B cell (primary cell): ENCODE measurements at regions of chr3 and their contacts with region 1.

Region 1: DNA sequence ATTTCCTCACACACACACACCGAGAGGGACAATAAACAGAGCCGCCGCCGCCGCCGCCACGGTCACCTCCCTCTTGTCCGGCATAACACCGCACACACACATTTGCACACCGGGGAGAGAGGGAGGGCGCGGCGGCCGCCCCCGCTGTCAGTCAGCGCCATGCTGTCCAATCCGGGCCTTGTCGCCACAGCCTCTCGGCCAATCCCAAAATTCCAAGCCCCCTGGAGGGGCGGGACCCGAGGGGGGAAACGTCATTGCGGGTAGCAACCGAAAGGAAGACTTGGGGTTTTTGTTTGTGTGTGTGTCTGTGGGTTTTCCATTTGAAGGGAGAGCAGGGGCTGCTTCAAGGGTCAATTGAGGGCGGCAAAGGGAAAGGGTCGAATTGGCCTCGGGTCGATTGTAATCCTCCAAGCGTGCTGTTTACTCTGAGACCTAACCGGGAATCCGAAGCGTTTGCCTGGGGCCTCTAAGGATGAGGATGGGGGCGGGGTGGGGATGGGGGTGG is at the start of gene TOP2B:
- DNase-seq: peak; percentile 96
- ATAC-seq: peak; percentile 86
- H3K4me3 ChIP-seq: peak within 1 kb of the TSS; percentile 60 to 96 (median 86)
- H3K4me3 Mint-ChIP-seq: peak within 1 kb of the TSS; percentile 97
- H3K27ac ChIP-seq: peak within 1 kb of the TSS; percentile 93 to 96
- H3K27ac Mint-ChIP-seq: peak within 1 kb of the TSS; percentile 96
- H3K4me1 ChIP-seq: peaks cover 31 to 47% of the 10 kb centered on the region in 2 donors
- H3K4me1 Mint-ChIP-seq: peaks cover 46% of the 10 kb centered on the region
- H3K27me3 ChIP-seq: no peaks in the 10 kb centered on the region
- H3K27me3 Mint-ChIP-seq: no peaks in the 10 kb centered on the region
- CTCF ChIP-seq: no peak
- total RNA-seq, gene TOP2B: 149 and 151 TPM in 2 replicates

Region 2: GRCh38 chr3:23805633-23806533 is 1859.0 kb before region 1 on chr3 and contains the start of gene UBE2E1:
- CTCF ChIA-PET with region 1: no interaction called
- POLR2A ChIA-PET with region 1: no interaction called
- intact Hi-C with region 1: loop called (anchors 10 kb)
- DNase-seq: peak; percentile 91
- ATAC-seq: peak; percentile 79
- H3K4me3 ChIP-seq: peak within 1 kb of the TSS in 4 of 5 experiments; percentile 57 to 88 (median 70)
- H3K4me3 Mint-ChIP-seq: peak within 1 kb of the TSS; percentile 96
- H3K27ac ChIP-seq: peak within 1 kb of the TSS; percentile 54 to 88
- H3K27ac Mint-ChIP-seq: peak within 1 kb of the TSS; percentile 97
- H3K4me1 ChIP-seq: peaks cover 32 to 36% of the 10 kb centered on the region in 2 donors
- H3K4me1 Mint-ChIP-seq: peaks cover 41% of the 10 kb centered on the region
- H3K27me3 ChIP-seq: no peaks in the 10 kb centered on the region
- H3K27me3 Mint-ChIP-seq: no peaks in the 10 kb centered on the region
- CTCF ChIP-seq: no peak
- total RNA-seq, gene UBE2E1: 63.7 and 68.2 TPM in 2 replicates

Region 3: GRCh38 chr3:23945903-23946751 is 1718.7 kb before region 1 on chr3:
- CTCF ChIA-PET with region 1: no interaction called
- POLR2A ChIA-PET with region 1: no interaction called
- intact Hi-C with region 1: loop called (anchors 5 kb)
- DNase-seq: peak; percentile 99
- ATAC-seq: peak; percentile 77
- H3K4me3 ChIP-seq: peak overlapping the region; percentile 49 to 88 (median 84)
- H3K4me3 Mint-ChIP-seq: peak overlapping the region; percentile 93
- H3K27ac ChIP-seq: peak overlapping the region; percentile 83
- H3K27ac Mint-ChIP-seq: peak overlapping the region; percentile 92
- H3K4me1 ChIP-seq: peaks cover 30 to 33% of the 10 kb centered on the region in 2 donors
- H3K4me1 Mint-ChIP-seq: peaks cover 48% of the 10 kb centered on the region
- H3K27me3 ChIP-seq: no peaks in the 10 kb centered on the region
- H3K27me3 Mint-ChIP-seq: no peaks in the 10 kb centered on the region
- CTCF ChIP-seq: no peak

Region 4: DNA sequence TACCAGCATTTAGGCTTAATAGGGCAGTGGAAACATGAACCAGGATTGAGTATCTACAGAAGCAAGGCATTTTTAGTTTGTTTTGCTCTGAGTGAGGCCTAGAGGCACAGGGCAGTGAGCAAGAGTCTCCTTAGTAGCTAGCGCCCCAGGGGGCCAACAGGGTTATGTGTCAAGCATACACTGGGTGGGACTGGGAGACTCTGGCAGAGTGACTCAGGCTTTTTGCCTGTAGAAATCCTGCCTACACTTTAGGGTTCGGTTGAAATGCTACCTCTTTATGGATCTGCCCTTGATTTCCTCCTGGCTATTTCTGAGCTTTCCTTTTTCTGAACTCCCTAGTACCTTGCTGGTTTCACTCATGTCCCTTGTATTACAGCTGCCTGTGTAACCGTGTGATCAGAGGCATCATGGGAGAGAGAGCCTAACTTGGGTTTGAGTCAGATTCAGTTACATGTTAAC is 72.3 kb before region 1 on chr3:
- CTCF ChIA-PET with region 1: no interaction called
- POLR2A ChIA-PET with region 1: no interaction called
- intact Hi-C with region 1: no loop called
- DNase-seq: no peak
- ATAC-seq: no peak
- H3K4me3 ChIP-seq: no peak overlapping the region
- H3K4me3 Mint-ChIP-seq: no peak overlapping the region
- H3K27ac ChIP-seq: no peak overlapping the region
- H3K27ac Mint-ChIP-seq: peak overlapping the region; percentile 12
- H3K4me1 ChIP-seq: no peaks in the 10 kb centered on the region
- H3K4me1 Mint-ChIP-seq: no peaks in the 10 kb centered on the region
- H3K27me3 ChIP-seq: no peaks in the 10 kb centered on the region
- H3K27me3 Mint-ChIP-seq: no peaks in the 10 kb centered on the region
- CTCF ChIP-seq: no peak

Region 5: DNA sequence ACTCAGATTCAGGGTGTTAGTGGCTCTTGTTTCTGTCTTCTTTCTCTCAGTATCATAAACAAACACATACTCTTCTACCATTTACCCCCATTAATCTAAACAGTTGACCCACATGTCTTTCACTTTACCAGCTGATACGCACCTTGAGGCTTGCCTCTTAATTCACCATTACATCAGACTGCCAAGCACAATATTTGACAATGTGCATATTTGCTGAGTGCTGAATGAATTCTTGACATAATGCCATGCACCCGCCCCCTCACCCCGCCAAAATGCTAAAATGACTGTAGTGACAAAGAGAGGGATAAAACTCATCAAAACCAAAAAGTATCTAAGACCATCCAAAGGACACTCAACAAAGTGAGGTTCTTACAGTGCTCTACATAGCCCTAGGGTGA is 61.0 kb after region 1 on chr3:
- CTCF ChIA-PET with region 1: interaction called, 5 read pairs
- POLR2A ChIA-PET with region 1: no interaction called
- intact Hi-C with region 1: loop called (anchors 5 kb)
- DNase-seq: no peak
- ATAC-seq: no peak
- H3K4me3 ChIP-seq: no peak overlapping the region
- H3K4me3 Mint-ChIP-seq: no peak overlapping the region
- H3K27ac ChIP-seq: no peak overlapping the region
- H3K27ac Mint-ChIP-seq: no peak overlapping the region
- H3K4me1 ChIP-seq: no peaks in the 10 kb centered on the region
- H3K4me1 Mint-ChIP-seq: no peaks in the 10 kb centered on the region
- H3K27me3 ChIP-seq: no peaks in the 10 kb centered on the region
- H3K27me3 Mint-ChIP-seq: no peaks in the 10 kb centered on the region
- CTCF ChIP-seq: no peak

Region 6: GRCh38 chr3:25789596-25790556 is 125.0 kb after region 1 on chr3 and contains the start of gene OXSM:
- CTCF ChIA-PET with region 1: no interaction called
- POLR2A ChIA-PET with region 1: no interaction called
- intact Hi-C with region 1: loop called (anchors 1 kb)
- DNase-seq: peak; percentile 98
- ATAC-seq: peak; percentile 94
- H3K4me3 ChIP-seq: peak within 1 kb of the TSS; percentile 60 to 95 (median 67)
- H3K4me3 Mint-ChIP-seq: peak within 1 kb of the TSS; percentile 97
- H3K27ac ChIP-seq: peak within 1 kb of the TSS; percentile 95 to 96
- H3K27ac Mint-ChIP-seq: peak within 1 kb of the TSS; percentile 94
- H3K4me1 ChIP-seq: peaks cover 14 to 16% of the 10 kb centered on the region in 2 donors
- H3K4me1 Mint-ChIP-seq: peaks cover 39% of the 10 kb centered on the region
- H3K27me3 ChIP-seq: no peaks in the 10 kb centered on the region
- H3K27me3 Mint-ChIP-seq: no peaks in the 10 kb centered on the region
- CTCF ChIP-seq: no peak
- total RNA-seq, gene OXSM: 15.4 and 18.7 TPM in 2 replicates

Region 7: DNA sequence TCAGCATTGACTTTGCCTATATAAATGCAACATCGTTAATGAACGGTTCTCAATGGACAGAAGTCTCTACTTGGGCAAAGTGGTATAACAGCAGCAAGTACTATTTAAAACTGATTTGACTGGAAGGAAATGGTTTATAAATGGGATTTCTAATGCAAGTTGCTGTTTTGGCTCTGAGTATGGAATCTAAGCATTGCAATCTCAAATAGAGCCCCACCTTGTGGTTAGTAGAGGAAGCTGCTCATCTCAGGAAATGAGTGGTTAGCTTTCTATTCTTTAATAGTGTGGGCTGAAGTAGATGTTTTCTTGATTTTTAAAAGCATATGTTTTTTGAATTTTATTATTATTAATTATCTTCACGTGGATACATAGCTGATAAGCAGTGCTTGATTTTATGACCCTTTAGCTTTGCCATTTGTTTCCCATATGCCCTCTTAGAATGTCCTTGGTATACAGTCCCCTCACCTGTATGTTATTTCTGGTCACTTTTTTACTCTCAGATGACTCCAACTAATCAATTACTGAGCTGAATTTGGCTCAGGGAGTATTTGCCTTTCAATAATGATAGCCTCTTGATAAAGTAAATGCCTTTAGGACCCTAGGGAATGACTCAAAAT is 192.1 kb after region 1 on chr3:
- CTCF ChIA-PET with region 1: interaction called, 46 read pairs
- POLR2A ChIA-PET with region 1: interaction called, 3 read pairs
- intact Hi-C with region 1: loop called (anchors 1 kb)
- DNase-seq: peak; percentile 65
- ATAC-seq: peak; percentile 63
- H3K4me3 ChIP-seq: no peak overlapping the region
- H3K4me3 Mint-ChIP-seq: no peak overlapping the region
- H3K27ac ChIP-seq: no peak overlapping the region
- H3K27ac Mint-ChIP-seq: no peak overlapping the region
- H3K4me1 ChIP-seq: no peaks in the 10 kb centered on the region
- H3K4me1 Mint-ChIP-seq: no peaks in the 10 kb centered on the region
- H3K27me3 ChIP-seq: no peaks in the 10 kb centered on the region
- H3K27me3 Mint-ChIP-seq: no peaks in the 10 kb centered on the region
- CTCF ChIP-seq: peak; percentile 86

Region 8: GRCh38 chr3:27484015-27484844 is 1819.4 kb after region 1 on chr3 and contains the start of gene SLC4A7:
- CTCF ChIA-PET with region 1: no interaction called
- POLR2A ChIA-PET with region 1: no interaction called
- intact Hi-C with region 1: loop called (anchors 5 kb)
- DNase-seq: peak; percentile 98
- ATAC-seq: peak; percentile 91
- H3K4me3 ChIP-seq: peak within 1 kb of the TSS; percentile 65 to 99 (median 81)
- H3K4me3 Mint-ChIP-seq: peak within 1 kb of the TSS; percentile 100
- H3K27ac ChIP-seq: peak within 1 kb of the TSS; percentile 64 to 90
- H3K27ac Mint-ChIP-seq: peak within 1 kb of the TSS; percentile 99
- H3K4me1 ChIP-seq: peaks cover 35 to 44% of the 10 kb centered on the region in 2 donors
- H3K4me1 Mint-ChIP-seq: peaks cover 38% of the 10 kb centered on the region
- H3K27me3 ChIP-seq: no peaks in the 10 kb centered on the region
- H3K27me3 Mint-ChIP-seq: no peaks in the 10 kb centered on the region
- CTCF ChIP-seq: no peak
- total RNA-seq, gene SLC4A7: 46.9 and 49.6 TPM in 2 replicates